AG04449 (cell line): ENCODE measurements at regions of chr15 and their contacts with region 1.

Region 1: DNA sequence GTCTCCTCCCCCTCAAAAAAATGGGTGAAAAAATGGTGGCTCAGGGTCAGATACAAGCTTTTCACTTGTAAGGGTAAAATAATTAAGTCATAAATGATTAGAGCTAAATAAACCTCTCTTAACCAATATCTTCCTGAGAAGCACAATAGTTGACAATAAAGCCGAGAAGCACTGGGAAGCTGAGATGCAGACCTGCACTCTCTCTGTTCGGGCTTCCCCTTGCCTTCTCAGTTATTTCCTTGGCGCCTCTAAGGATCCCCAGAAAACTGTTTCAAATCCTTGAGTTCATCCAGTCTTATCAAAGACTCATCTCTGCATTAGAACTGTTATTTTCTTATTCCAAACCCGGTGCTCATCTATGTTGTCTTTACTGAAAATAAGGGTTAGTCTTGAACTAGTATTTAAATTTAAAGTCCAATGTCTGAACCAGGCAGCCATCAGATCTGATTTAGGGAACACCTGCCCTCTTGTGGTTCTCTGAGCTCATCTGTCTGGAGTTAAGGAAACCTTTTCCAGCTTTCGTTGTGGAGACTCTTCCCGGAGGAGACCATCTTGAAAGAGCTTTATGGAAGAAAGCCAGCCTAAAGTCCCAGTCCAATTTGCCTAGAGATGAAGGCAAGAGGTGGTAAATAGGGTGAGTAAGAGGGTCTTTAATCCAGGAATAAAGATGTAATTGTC is 256.4 kb upstream of the MCTP2 start:
- DNase-seq: no peak
- H3K4me3 ChIP-seq: no peak overlapping the region
- CTCF ChIP-seq: peak; percentile 54

Region 2: DNA sequence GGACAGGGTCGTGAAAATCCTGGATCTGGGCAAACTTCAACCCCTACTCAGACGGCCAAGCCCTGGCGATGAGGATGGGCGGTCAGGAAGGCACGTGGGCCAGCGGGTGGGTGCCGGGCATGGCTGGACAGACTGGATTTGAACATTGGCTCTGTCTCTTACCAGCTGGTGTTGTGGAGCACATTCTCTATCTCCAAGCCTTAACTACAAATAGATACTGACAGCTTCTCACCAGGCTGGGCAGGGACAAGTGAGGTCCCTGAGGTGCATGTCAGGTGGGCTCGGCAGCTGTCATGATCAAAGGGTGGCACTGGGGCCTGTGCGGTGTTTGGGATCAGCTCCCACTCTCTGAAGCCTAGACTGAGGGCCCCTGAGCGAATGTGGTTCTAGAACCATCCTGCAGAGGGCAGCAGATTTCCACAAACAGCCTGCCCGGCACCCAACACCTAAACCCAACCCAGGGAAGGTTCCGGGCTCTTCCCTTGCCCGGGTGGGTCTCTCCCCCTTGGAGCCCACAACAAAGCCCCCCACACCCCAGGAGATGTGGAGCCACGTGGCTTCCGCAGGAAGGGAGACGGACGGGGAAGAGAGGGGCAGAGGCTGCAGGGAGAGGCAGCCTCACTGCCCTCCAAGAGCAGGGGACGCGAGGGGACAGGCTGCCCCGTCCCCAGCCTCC is 944.4 kb before region 1 on chr15:
- CTCF ChIA-PET with region 1: interaction called, 16 read pairs
- POLR2A ChIA-PET with region 1: no interaction called
- DNase-seq: no peak
- H3K4me3 ChIP-seq: no peak overlapping the region
- CTCF ChIP-seq: peak; percentile 79

Region 3: GRCh38 chr15:93035953-93036800 is 938.8 kb before region 1 on chr15:
- CTCF ChIA-PET with region 1: interaction called, 13 read pairs
- POLR2A ChIA-PET with region 1: no interaction called
- DNase-seq: no peak
- H3K4me3 ChIP-seq: no peak overlapping the region
- CTCF ChIP-seq: peak; percentile 61

Region 4: GRCh38 chr15:93087825-93088199 is 887.1 kb before region 1 on chr15:
- CTCF ChIA-PET with region 1: interaction called, 31 read pairs
- POLR2A ChIA-PET with region 1: no interaction called
- DNase-seq: no peak
- H3K4me3 ChIP-seq: no peak overlapping the region
- CTCF ChIP-seq: peak; percentile 76

Region 5: DNA sequence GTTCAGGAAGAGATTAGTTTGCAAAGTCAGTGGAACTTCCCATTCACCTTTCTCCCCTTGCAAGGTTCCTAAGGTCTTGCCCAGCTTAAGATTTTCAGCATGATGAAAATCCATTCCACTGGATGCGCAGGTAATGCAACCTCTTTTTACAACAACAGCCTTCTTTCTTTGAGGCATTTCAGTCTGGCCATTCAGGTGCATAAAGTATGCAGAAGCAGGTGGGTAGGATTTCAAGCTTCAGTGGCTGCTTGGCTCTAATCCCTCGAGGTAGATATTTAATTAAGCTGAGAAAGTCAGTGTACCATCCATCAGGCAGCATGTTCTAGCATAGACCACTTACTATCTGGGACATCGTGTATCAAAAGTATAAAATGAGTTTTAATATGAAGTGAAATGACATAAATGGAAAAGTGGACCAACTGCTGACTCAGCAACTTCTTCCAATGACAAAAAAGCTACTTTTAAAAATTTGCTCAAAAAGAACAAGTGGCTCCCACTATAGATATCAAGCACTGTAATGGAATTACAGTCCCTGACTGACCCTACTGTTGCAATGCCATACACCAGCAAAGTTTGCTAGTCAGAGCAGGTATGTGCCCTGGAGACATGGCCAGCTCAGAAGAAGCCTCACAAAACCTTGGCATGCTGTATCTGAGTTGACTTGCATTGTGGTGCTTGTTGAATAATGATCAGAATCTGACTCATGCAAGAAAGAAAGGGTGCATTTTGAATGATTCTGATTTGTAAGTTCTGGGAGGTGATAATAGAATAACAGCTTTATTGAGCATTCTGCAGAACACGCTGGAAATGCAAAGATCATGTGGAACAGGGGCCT is 203.5 kb before region 1 on chr15:
- CTCF ChIA-PET with region 1: no interaction called
- POLR2A ChIA-PET with region 1: no interaction called
- DNase-seq: no peak
- H3K4me3 ChIP-seq: no peak overlapping the region
- CTCF ChIP-seq: no peak

Region 6: DNA sequence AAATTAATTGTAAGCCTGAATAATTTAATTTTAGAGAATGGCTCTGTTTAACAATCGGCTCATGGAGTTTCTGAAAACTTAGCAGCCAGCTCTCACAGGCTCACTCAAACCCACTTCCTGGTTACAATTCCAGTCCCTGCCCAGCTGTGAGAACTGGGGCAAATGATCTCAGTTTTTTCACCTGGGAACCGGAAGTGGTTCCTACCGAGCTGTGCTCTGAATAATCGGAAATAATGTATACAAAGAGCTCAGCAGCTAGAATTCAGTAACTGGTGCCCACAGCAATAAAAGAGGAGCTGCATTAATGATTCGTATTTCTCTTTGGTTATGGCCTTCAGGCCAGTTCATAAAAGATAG is 12.1 kb after region 1 on chr15:
- CTCF ChIA-PET with region 1: interaction called, 12 read pairs
- POLR2A ChIA-PET with region 1: no interaction called
- DNase-seq: no peak
- H3K4me3 ChIP-seq: no peak overlapping the region
- CTCF ChIP-seq: no peak

Region 7: DNA sequence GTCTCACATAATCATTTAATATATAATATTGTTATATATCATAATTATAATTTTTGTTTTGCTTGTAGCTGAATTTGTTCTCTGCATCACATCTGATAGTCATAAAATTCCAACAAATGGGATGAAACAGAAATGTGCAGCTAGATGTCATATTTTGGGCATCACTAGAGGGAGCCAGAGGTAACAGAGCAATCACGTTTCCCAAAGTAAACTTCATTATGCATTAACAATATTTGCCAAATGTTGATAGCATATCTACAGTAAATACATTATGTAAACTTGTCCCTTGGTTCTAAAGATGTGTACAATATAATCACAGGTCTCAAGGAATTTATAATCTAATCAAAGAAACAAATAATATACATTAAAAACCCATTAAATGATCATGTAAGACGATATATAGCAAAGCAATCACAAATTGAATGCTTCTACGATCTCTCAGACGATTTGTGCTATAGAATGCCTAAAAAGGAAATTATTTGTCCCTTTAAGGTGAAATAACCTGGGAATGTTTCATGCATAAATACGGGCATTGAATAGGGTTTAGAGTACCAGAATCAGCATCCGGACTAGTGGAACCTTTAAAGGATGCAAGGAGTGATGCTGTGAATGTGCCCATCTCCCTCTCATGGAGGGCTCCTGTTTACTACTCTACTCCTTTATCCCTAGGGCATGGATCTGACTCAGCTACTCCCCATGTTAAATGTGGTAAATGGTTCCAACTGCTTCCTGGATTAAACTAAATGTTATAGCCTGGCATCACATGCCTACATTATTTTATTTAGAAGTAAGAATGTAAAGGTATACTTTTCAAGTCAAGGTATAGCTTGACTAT is 22.4 kb after region 1 on chr15:
- CTCF ChIA-PET with region 1: interaction called, 20 read pairs
- POLR2A ChIA-PET with region 1: no interaction called
- DNase-seq: no peak
- H3K4me3 ChIP-seq: no peak overlapping the region
- CTCF ChIP-seq: peak; percentile 71

Region 8: DNA sequence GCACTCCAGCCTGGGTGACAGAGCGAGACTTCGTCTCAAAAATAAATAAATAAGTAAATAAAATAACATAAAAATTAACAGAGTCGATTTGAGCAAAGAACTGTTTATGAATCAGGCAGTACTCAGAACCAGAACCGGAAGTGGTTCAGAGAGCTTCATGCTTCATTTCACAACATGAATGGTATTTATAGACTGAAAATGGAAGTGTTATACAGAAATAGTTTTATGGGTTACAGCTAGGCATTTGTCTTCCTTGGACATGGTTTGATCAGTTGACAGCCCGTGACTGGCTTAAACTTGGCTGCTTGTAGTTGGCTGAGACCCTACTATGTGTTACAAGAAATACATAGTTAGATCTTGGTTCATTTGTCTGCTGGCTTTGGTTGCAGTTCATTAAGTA is 40.4 kb after region 1 on chr15:
- CTCF ChIA-PET with region 1: no interaction called
- POLR2A ChIA-PET with region 1: no interaction called
- DNase-seq: no peak
- H3K4me3 ChIP-seq: no peak overlapping the region
- CTCF ChIP-seq: no peak